ENCODE measurements at regions of chr16 and their contacts with region 1.

Region 1: GRCh38 chr16:23491490-23492391 is 18.6 kb downstream of the GGA2 start:
- DNase-seq: peak; percentile 39
- H3K4me3 ChIP-seq: no peak overlapping the region
- H3K27ac ChIP-seq: peak overlapping the region; percentile 46
- H3K4me1 ChIP-seq: peaks cover 25% of the 10 kb centered on the region
- H3K27me3 ChIP-seq: no peaks in the 10 kb centered on the region
- CTCF ChIP-seq: no peak
- POLR2A ChIP-seq: no peak

Region 2: DNA sequence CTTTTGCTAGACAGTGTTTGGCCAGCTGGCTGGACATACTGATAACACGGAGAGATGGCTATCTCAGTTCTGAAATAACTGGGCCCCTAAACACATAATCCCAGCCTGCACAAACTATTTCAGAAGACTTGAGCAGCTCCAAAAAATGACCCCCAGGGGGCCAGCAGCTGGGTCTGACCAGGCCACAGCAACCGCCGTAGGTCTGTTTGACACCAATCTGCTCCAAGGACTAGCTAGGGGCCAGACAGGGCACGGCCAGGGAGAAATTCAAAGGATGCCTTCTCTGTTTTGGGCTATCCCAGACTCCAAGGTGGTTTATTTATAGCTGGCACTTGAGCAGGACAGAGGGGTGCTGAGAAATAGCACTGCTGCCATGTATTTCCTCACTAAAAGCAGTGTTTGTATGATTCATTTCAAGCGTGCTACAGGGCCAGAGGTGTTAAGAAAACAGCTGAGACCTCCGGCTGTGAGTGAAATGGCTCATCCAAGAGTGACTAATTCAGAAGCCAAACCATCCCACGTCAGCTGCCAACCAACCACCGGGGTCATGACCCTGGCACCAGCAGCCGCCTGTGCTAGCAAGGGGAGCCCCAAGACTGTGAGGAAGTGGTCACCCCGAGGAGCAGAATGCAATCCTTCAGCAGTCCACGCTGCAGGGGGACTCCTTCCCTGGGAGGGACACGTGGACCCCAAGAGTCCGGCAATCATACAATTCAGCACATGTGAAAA is 12.9 kb after region 1 on chr16:
- CTCF ChIA-PET with region 1: interaction called, 8 read pairs
- POLR2A ChIA-PET with region 1: no interaction called
- dilution Hi-C with region 1: no loop called
- intact Hi-C with region 1: loop called (anchors 1 kb)
- DNase-seq: peak; percentile 87
- H3K4me3 ChIP-seq: no peak overlapping the region
- H3K27ac ChIP-seq: peak overlapping the region; percentile 64
- H3K4me1 ChIP-seq: peaks cover 20% of the 10 kb centered on the region
- H3K27me3 ChIP-seq: no peaks in the 10 kb centered on the region
- CTCF ChIP-seq: no peak
- POLR2A ChIP-seq: no peak

Region 3: DNA sequence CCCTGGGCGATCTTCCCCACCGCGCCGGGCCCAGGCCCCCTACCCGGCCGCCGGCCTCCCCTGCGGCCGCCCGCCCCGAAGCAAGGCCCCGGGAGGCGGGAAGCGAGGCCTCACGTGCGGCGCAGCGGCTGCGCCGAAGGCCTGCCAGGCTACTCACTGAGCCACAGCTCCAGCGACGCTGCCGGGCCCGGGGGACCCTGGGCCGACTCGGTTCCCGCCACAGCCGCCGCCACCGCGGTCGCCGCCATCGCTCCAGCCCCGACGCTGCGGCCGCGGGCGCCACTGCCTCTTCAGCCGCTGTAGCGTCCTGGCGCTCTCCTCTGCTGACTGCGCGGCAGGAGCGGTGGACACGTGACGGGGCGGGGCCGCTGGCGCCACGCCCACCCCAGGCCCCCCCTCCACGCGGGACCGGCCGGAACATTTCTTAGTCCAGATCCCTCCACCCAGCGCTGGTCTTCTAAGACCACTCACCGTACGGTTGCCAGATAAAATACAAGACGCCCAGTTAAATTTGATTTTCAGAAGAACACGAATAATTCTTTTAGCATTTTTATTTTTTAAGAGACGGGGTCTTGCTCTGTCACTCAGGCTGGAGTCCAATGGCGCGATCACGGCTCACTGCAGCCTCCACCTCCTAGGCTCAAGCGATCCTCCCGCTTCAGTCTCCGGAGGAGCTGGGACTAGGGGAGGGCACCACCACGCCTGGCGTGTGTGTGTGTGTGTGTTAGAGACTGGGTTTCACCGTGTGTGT is 18.6 kb after region 1 on chr16 and contains the start of gene GGA2:
- CTCF ChIA-PET with region 1: interaction called, 5 read pairs
- POLR2A ChIA-PET with region 1: interaction called, 3 read pairs
- dilution Hi-C with region 1: no loop called
- intact Hi-C with region 1: loop called (anchors 1 kb)
- DNase-seq: peak; percentile 91
- H3K4me3 ChIP-seq: peak within 1 kb of the TSS; percentile 10 to 69 (median 60)
- H3K27ac ChIP-seq: peak within 1 kb of the TSS; percentile 27
- H3K4me1 ChIP-seq: peaks cover under 1% of the 10 kb centered on the region
- H3K27me3 ChIP-seq: no peaks in the 10 kb centered on the region
- CTCF ChIP-seq: no peak
- POLR2A ChIP-seq: peak; percentile 88
- total RNA-seq, gene GGA2: 67.5 and 73.1 TPM in 2 replicates